ENCODE measurements at regions of chr4 and their contacts with region 1.

Region 1: GRCh38 chr4:38585871-38586270 is 78.1 kb upstream of the KLF3 start:
- DNase-seq: no peak
- ATAC-seq: no peak
- H3K4me3 ChIP-seq: no peak overlapping the region
- H3K27ac ChIP-seq: no peak overlapping the region
- H3K4me1 ChIP-seq: no peaks in the 10 kb centered on the region
- H3K27me3 ChIP-seq: peaks cover 0 to under 1% of the 10 kb centered on the region in 2 experiments; a peak in 1 of 5 replicates
- CTCF ChIP-seq: no peak
- EP300 ChIP-seq: no peak
- POLR2A ChIP-seq: no peak
- RAD21 ChIP-seq: no peak

Region 2: GRCh38 chr4:38359113-38359512 is 226.8 kb before region 1 on chr4:
- CTCF ChIA-PET with region 1: no interaction called
- POLR2A ChIA-PET with region 1: no interaction called
- in situ Hi-C with region 1: no loop called
- intact Hi-C with region 1: no loop called
- DNase-seq: no peak
- ATAC-seq: no peak
- H3K4me3 ChIP-seq: no peak overlapping the region
- H3K27ac ChIP-seq: no peak overlapping the region
- H3K4me1 ChIP-seq: peaks cover 7% of the 10 kb centered on the region; the same call in 1 of the 2 replicates
- H3K27me3 ChIP-seq: no peaks in the 10 kb centered on the region
- CTCF ChIP-seq: no peak
- EP300 ChIP-seq: no peak
- POLR2A ChIP-seq: no peak
- RAD21 ChIP-seq: no peak

Region 3: DNA sequence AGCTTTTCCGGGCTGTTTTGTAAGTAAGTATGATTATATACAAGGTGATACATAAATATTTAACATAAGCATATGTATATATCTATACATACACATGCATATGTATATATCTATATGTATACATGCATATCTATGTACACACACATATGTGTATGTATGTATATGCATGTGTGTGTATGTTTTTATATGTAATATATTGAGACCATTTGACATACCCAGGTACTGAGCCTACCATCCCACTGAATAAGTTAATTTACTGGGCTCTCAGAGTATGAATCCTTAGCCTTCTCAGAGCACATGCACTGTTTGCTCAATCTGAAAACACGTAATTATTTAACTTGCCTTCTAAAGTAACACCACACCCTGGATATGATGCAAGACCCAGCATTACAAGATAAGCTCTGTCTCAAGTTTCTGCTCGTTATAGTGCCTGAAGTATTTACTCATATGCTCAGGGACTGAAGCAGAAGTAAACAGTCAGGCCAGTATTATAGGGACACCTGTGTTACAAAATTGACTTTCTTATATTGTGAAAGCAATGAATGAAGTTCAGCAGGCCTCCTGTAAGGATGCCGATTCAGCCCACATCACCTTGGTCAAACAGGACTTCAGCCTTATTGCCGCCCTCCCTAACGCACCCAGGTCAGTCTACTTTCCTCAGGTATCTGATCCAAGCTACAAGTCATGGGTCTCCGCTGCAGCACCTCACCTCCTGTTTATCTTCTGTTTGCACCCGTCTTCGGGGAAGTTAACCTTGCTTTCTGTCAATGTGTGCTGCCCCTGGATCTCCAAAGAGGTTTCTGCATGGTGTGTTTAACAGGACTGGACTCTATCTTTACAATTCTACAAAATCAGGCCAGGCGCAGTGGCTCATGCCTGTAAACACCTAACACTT is 35.2 kb after region 1 on chr4:
- CTCF ChIA-PET with region 1: no interaction called
- POLR2A ChIA-PET with region 1: no interaction called
- in situ Hi-C with region 1: no loop called
- intact Hi-C with region 1: loop called (anchors 1 kb)
- DNase-seq: peak; percentile 44
- ATAC-seq: peak; percentile 64
- H3K4me3 ChIP-seq: peak overlapping the region in 2 of 3 experiments; percentile 11 to 29; a peak in 2 of 6 replicates
- H3K27ac ChIP-seq: no peak overlapping the region
- H3K4me1 ChIP-seq: peaks cover 49% of the 10 kb centered on the region
- H3K27me3 ChIP-seq: no peaks in the 10 kb centered on the region
- CTCF ChIP-seq: no peak
- EP300 ChIP-seq: peak in 1 of 2 experiments; percentile 70; a peak in 2 of 4 replicates
- POLR2A ChIP-seq: no peak
- RAD21 ChIP-seq: no peak

Measured in HepG2 (cell line).